Activated T-helper 1 cell treated with anti-CD3 and anti-CD28 coated beads, Interleukin-12 subunit alpha, Interleukin-12 subunit beta, Interleukin-2, Interleukin-4 antibody, amounts not matched to agents 30 ng/mL and 10 ng/mL and 1 ng/mL, durations not matched to agents 14 hours and 24 hours and 36 hours (primary cell): ENCODE measurements at regions of chr22 and their contacts with region 1.

Region 1: DNA sequence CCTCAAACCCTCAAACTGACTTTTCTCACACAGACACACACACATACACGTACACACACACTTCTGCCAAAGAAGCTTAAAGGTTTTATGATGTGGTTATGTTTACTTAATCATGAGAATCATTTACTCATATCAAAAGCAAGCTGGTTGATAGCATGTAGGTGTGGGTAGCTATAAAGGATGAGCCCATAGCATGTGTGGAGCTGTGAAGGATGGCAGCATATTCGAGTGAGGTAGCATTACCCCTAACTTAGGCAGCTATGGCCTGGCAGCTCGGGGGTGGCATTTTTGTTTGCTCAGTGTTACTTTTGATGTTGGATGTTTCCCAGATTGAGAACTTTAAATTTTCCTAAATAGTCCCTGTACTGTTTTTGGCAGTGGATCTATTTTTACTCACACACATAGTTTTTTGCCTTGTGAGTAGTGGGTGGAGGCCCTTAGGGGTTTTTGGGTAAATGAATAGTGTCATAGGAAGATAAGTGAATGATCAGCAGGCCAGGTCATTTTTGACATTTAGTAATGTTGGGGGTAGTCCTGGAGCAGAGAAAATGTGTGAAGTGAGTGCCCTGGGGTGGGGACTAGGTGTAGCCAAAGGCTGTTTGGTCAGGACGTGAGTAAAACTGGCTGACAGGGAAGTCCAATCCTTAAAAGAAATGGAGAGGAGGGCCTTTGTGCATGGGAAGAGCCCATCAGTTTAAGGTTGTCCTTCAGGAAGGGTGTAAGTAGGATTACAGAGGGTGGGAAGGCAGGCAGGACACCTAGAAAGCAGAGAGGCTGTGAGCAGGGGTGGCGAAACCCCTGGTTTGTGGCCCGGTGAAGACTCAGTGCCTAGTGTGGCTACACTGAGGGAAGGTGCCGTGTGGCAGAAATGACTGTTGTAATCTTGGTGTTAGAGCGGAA is 7.1 kb downstream of the YWHAH start:
- DNase-seq: no peak
- H3K4me3 Mint-ChIP-seq: no peak overlapping the region
- H3K27ac Mint-ChIP-seq: peak overlapping the region; percentile 78
- H3K4me1 Mint-ChIP-seq: peaks cover 63% of the 10 kb centered on the region
- H3K27me3 Mint-ChIP-seq: no peaks in the 10 kb centered on the region

Region 2: GRCh38 chr22:31829505-31829904 is 121.9 kb before region 1 on chr22:
- intact Hi-C with region 1: loop called (anchors 1 kb)
- DNase-seq: peak; percentile 7
- H3K4me3 Mint-ChIP-seq: peak overlapping the region; percentile 72
- H3K27ac Mint-ChIP-seq: peak overlapping the region; percentile 95
- H3K4me1 Mint-ChIP-seq: peaks cover 30% of the 10 kb centered on the region
- H3K27me3 Mint-ChIP-seq: no peaks in the 10 kb centered on the region

Region 3: GRCh38 chr22:31970490-31971444 is 19.3 kb after region 1 on chr22:
- intact Hi-C with region 1: loop called (anchors 1 kb)
- DNase-seq: peak; percentile 86
- H3K4me3 Mint-ChIP-seq: peak overlapping the region; percentile 77
- H3K27ac Mint-ChIP-seq: no peak overlapping the region
- H3K4me1 Mint-ChIP-seq: peaks cover 14% of the 10 kb centered on the region
- H3K27me3 Mint-ChIP-seq: peaks cover 4% of the 10 kb centered on the region

Region 4: DNA sequence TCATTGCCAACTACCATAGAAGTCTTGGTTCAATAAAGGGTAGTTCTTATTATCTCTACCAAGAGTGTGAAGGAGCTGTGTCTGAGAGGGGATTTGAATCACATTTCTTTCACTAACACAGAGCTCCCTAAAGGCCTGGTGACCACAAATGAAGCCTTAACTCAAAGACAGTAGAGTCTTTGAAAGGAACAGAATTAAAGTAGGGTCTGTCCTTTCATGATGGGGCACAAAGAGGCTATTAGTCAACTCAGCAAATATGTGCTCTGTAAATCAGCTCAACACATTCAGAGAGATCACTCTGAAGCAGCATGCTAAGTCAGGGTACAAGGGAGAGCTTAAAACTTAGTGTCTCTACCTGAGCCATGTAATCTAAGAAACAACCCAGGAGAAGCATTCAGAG is 1319.2 kb after region 1 on chr22:
- intact Hi-C with region 1: no loop called
- DNase-seq: no peak
- H3K4me3 Mint-ChIP-seq: no peak overlapping the region
- H3K27ac Mint-ChIP-seq: no peak overlapping the region
- H3K4me1 Mint-ChIP-seq: no peaks in the 10 kb centered on the region
- H3K27me3 Mint-ChIP-seq: no peaks in the 10 kb centered on the region